Ovary (tissue), 10 donors: ENCODE measurements at regions of chr3 and their contacts with region 1.

Region 1: DNA sequence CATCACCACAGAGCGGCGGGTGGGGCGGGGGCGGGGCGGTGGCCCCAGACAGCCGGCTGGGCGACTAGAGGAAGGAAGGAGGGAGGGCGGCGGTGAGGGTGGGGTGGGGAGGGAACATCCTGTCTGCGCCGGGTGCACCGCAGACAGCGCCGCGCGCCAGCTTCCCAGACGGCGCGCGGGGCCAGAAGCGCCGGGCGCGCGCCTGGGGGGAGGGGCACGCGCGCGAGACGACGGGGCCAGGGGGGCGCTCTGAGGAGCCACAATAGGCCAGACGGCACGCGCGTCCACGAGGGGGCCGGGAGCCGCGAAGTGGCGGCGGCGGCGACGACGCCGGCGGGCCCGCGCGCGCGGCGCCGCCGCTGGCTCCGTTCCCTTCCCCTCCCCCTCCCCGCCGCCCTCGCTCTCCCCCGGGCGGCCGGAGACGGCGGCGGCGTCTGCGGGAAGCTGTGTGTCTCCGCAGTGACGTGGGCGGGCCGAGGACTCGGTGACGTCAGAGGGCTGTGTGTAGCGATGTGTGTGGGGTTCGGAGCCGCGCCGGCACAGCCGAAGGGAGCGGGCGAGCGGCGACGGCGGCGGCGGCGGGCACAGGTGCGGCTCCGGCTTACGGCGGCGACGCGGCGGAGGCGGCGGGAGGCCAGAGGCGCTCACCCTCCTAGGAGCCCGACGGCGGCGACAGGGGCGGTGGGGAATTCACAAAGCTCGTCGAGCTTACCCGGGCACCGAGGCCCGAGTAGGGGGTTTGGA is at the start of gene SKIL:
- DNase-seq: peak; percentile 96 to 98 (median 97)
- H3K4me3 ChIP-seq: peak within 1 kb of the TSS; percentile 79
- H3K27ac ChIP-seq: peak within 1 kb of the TSS; percentile 99 to 100
- H3K4me1 ChIP-seq: peaks cover 9% of the 10 kb centered on the region
- H3K27me3 ChIP-seq: no peaks in the 10 kb centered on the region
- CTCF ChIP-seq: peak in 2 of 3 donors; percentile 27 to 37
- EP300 ChIP-seq: no peak
- POLR2A ChIP-seq: peak; percentile 90
- total RNA-seq, gene SKIL: 39.3 to 57.8 (median 50.3) TPM

Region 2: GRCh38 chr3:169772897-169773828 is 584.2 kb before region 1 on chr3 and contains the start of gene MYNN:
- intact Hi-C with region 1: loop called in 1 of 4 experiments (anchors 10 kb)
- DNase-seq: peak; percentile 92 to 95 (median 94)
- H3K4me3 ChIP-seq: peak within 1 kb of the TSS; percentile 99
- H3K27ac ChIP-seq: peak within 1 kb of the TSS; percentile 91 to 97
- H3K4me1 ChIP-seq: peaks cover 4% of the 10 kb centered on the region
- H3K27me3 ChIP-seq: no peaks in the 10 kb centered on the region
- CTCF ChIP-seq: no peak
- EP300 ChIP-seq: peak; percentile 39
- POLR2A ChIP-seq: peak; percentile 100
- total RNA-seq, gene MYNN: 14.1 to 23.6 (median 20.0) TPM

Region 3: GRCh38 chr3:169966428-169966950 is 390.9 kb before region 1 on chr3 and contains the start of gene SEC62:
- intact Hi-C with region 1: loop called in 1 of 4 experiments (anchors 5 kb)
- DNase-seq: peak; percentile 94 to 98 (median 97)
- H3K4me3 ChIP-seq: peak within 1 kb of the TSS; percentile 99
- H3K27ac ChIP-seq: peak within 1 kb of the TSS; percentile 81 to 94
- H3K4me1 ChIP-seq: peaks cover 5% of the 10 kb centered on the region
- H3K27me3 ChIP-seq: no peaks in the 10 kb centered on the region
- CTCF ChIP-seq: peak in 2 of 3 donors; percentile 49 to 59
- EP300 ChIP-seq: no peak
- POLR2A ChIP-seq: peak; percentile 82
- total RNA-seq, gene SEC62: 34.0 to 178 (median 131) TPM

Region 4: GRCh38 chr3:170180908-170181879 is 176.2 kb before region 1 on chr3 and contains the start of gene PHC3:
- intact Hi-C with region 1: loop called in 2 of 4 experiments (anchors 10 kb)
- DNase-seq: peak; percentile 90 to 95 (median 93)
- H3K4me3 ChIP-seq: peak within 1 kb of the TSS; percentile 75
- H3K27ac ChIP-seq: peak within 1 kb of the TSS; percentile 82 to 83
- H3K4me1 ChIP-seq: peaks cover 4% of the 10 kb centered on the region
- H3K27me3 ChIP-seq: no peaks in the 10 kb centered on the region
- CTCF ChIP-seq: peak in 2 of 3 donors; percentile 47 to 49
- EP300 ChIP-seq: no peak
- POLR2A ChIP-seq: peak; percentile 86
- total RNA-seq, gene PHC3: 43.3 to 121 (median 91.3) TPM

Region 5: GRCh38 chr3:170307671-170308403 is 49.5 kb before region 1 on chr3:
- intact Hi-C with region 1: loop called in 1 of 4 experiments (anchors 5 kb)
- DNase-seq: no peak
- H3K4me3 ChIP-seq: no peak overlapping the region
- H3K27ac ChIP-seq: no peak overlapping the region
- H3K4me1 ChIP-seq: peaks cover 1% of the 10 kb centered on the region
- H3K27me3 ChIP-seq: no peaks in the 10 kb centered on the region
- CTCF ChIP-seq: no peak
- EP300 ChIP-seq: no peak
- POLR2A ChIP-seq: no peak

Region 6: GRCh38 chr3:172256101-172256734 is 1898.9 kb after region 1 on chr3:
- intact Hi-C with region 1: loop called in 1 of 4 experiments (anchors 5 kb)
- DNase-seq: peak; percentile 50 to 80 (median 60)
- H3K4me3 ChIP-seq: no peak overlapping the region
- H3K27ac ChIP-seq: peak overlapping the region; percentile 56 to 82
- H3K4me1 ChIP-seq: peaks cover 28% of the 10 kb centered on the region
- H3K27me3 ChIP-seq: no peaks in the 10 kb centered on the region
- CTCF ChIP-seq: no peak
- EP300 ChIP-seq: no peak
- POLR2A ChIP-seq: no peak